ENCODE measurements at regions of chr20 and their contacts with region 1.

Region 1: DNA sequence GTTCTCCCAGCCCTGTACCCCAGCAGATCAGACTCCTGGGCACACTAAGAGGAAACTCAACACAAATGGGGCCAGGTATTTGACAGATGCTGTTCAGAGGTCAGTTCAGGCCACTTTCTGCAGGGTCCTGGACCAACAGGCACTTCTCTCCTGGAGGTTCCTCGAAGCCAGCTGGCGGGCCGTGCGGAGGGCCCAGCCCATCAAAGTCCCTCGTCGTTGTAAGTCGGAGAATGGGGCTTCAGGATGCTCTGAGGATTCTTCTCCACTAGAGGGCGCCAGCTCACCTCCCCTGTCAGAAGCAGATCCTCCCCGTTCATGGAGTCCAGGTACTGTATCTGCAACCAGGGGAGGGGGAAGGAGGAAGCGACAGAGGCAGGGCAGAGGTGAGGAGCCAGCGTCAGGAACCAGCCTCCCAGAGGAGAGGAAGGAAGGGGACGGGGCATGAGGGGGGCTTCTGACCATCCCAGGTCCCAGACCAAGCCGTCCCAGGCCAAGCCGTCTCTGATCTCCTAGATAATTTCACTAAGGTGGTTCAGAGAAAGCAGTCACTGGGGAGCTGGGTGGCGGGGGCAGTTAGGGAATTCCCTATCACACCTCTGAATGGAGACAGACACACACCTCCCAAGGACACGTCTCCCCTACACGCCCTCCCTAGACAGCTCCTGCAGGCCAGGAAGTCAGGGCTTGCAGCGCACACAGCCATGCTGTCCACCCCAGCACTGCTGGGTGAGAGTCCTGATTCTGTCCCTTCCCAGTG is 11.7 kb upstream of the FAM83C start:
- DNase-seq: peak; percentile 91
- ATAC-seq: peak; percentile 74
- H3K4me3 ChIP-seq: no peak overlapping the region
- H3K27ac ChIP-seq: peak overlapping the region; percentile 49
- H3K4me1 ChIP-seq: peaks cover 49% of the 10 kb centered on the region
- H3K27me3 ChIP-seq: no peaks in the 10 kb centered on the region
- CTCF ChIP-seq: peak; percentile 100
- EP300 ChIP-seq: 0 out of 4 replicates have a peak, but pooled peaks of 1 of the 2 experiments have one; percentile 12
- POLR2A ChIP-seq: no peak
- RAD21 ChIP-seq: peak; percentile 98

Region 2: GRCh38 chr20:35252037-35252461 is 51.9 kb before region 1 on chr20:
- CTCF ChIA-PET with region 1: no interaction called
- POLR2A ChIA-PET with region 1: no interaction called
- in situ Hi-C with region 1: no loop called
- intact Hi-C with region 1: no loop called
- DNase-seq: no peak
- ATAC-seq: no peak; the same call in 2 of the 3 replicates
- H3K4me3 ChIP-seq: no peak overlapping the region
- H3K27ac ChIP-seq: no peak overlapping the region
- H3K4me1 ChIP-seq: peaks cover 7% of the 10 kb centered on the region
- H3K27me3 ChIP-seq: no peaks in the 10 kb centered on the region
- CTCF ChIP-seq: no peak
- EP300 ChIP-seq: no peak
- POLR2A ChIP-seq: no peak
- RAD21 ChIP-seq: no peak

Region 3: DNA sequence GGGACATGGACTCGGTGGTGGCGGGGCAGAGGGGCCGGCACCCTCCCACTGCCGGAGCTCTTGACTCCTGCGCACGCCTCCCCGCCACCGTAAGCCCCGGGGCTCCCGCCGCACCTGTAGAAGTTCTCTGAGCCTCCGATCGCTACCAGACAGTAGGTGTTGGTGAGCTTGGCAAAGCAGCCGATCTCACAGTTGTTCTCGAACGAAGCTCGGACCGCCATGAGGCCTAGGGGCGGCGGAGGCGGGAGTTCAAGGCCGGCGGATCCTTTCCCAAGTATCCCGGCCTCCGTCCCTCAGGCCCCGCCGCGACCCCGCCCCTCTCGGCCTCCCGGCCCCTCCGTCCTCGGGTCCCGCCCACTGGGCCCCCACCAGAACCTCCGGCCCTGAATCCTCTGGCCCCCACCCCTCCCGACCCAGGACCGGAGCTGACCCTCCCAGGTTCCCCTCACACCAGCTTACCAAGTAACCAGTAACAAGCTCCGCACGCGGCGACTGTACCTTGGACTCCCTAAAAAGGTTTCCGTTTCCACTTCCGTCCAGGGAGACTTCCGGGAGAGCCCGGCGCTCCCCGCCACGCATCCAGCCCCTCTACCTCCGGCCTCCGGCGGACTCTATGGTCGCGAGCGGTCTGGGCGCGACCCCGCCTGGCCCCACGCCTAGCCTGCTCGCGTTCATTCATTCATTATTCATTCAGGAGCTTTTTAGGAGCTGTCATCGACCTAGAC is 19.5 kb before region 1 on chr20 and contains the start of gene EIF6:
- CTCF ChIA-PET with region 1: interaction called, 5 read pairs
- POLR2A ChIA-PET with region 1: interaction called, 49 read pairs
- in situ Hi-C with region 1: no loop called
- intact Hi-C with region 1: no loop called
- DNase-seq: peak; percentile 99
- ATAC-seq: peak; percentile 76
- H3K4me3 ChIP-seq: peak within 1 kb of the TSS; percentile 80 to 98 (median 81)
- H3K27ac ChIP-seq: peak within 1 kb of the TSS; percentile 95
- H3K4me1 ChIP-seq: peaks cover 74% of the 10 kb centered on the region
- H3K27me3 ChIP-seq: peaks cover 0 to 2% of the 10 kb centered on the region in 2 experiments; a peak in 2 of 5 replicates
- CTCF ChIP-seq: peak; percentile 19; the same call in 1 of the 2 replicates
- EP300 ChIP-seq: peak; percentile 43 to 59; a peak in 3 of 4 replicates
- POLR2A ChIP-seq: peak; percentile 94 to 96
- RAD21 ChIP-seq: peak; percentile 44
- total RNA-seq, gene EIF6: 462 and 603 TPM in 2 replicates

Region 4: GRCh38 chr20:35318502-35319157 is 14.7 kb after region 1 on chr20:
- CTCF ChIA-PET with region 1: interaction called, 4 read pairs
- POLR2A ChIA-PET with region 1: interaction called, 53 read pairs
- in situ Hi-C with region 1: no loop called
- intact Hi-C with region 1: no loop called
- DNase-seq: peak; percentile 71
- ATAC-seq: no peak
- H3K4me3 ChIP-seq: no peak overlapping the region
- H3K27ac ChIP-seq: no peak overlapping the region
- H3K4me1 ChIP-seq: peaks cover 25% of the 10 kb centered on the region
- H3K27me3 ChIP-seq: no peaks in the 10 kb centered on the region
- CTCF ChIP-seq: no peak
- EP300 ChIP-seq: no peak
- POLR2A ChIP-seq: no peak
- RAD21 ChIP-seq: no peak

Region 5: GRCh38 chr20:35329435-35330139 is 25.7 kb after region 1 on chr20:
- CTCF ChIA-PET with region 1: interaction called, 204 read pairs
- POLR2A ChIA-PET with region 1: interaction called, 78 read pairs
- in situ Hi-C with region 1: loop called (anchors 5 kb)
- intact Hi-C with region 1: loop called (anchors 1 kb)
- DNase-seq: peak; percentile 75
- ATAC-seq: peak; percentile 58
- H3K4me3 ChIP-seq: no peak overlapping the region
- H3K27ac ChIP-seq: peak overlapping the region; percentile 74
- H3K4me1 ChIP-seq: peaks cover 58% of the 10 kb centered on the region
- H3K27me3 ChIP-seq: no peaks in the 10 kb centered on the region
- CTCF ChIP-seq: peak; percentile 85
- EP300 ChIP-seq: 0 out of 4 replicates have a peak, but pooled peaks of 1 of the 2 experiments have one; percentile 3
- POLR2A ChIP-seq: no peak
- RAD21 ChIP-seq: peak; percentile 91

Region 6: GRCh38 chr20:35344354-35344837 is 40.5 kb after region 1 on chr20:
- CTCF ChIA-PET with region 1: no interaction called
- POLR2A ChIA-PET with region 1: no interaction called
- in situ Hi-C with region 1: no loop called
- intact Hi-C with region 1: loop called (anchors 5 kb)
- DNase-seq: peak; percentile 92
- ATAC-seq: peak; percentile 81
- H3K4me3 ChIP-seq: no peak overlapping the region
- H3K27ac ChIP-seq: peak overlapping the region; percentile 1
- H3K4me1 ChIP-seq: peaks cover 14% of the 10 kb centered on the region
- H3K27me3 ChIP-seq: no peaks in the 10 kb centered on the region
- CTCF ChIP-seq: 0 out of 2 replicates have a peak, but pooled peaks have one; percentile 3
- EP300 ChIP-seq: peak in 1 of 2 experiments; percentile 36; a peak in 3 of 4 replicates
- POLR2A ChIP-seq: no peak
- RAD21 ChIP-seq: no peak

Region 7: DNA sequence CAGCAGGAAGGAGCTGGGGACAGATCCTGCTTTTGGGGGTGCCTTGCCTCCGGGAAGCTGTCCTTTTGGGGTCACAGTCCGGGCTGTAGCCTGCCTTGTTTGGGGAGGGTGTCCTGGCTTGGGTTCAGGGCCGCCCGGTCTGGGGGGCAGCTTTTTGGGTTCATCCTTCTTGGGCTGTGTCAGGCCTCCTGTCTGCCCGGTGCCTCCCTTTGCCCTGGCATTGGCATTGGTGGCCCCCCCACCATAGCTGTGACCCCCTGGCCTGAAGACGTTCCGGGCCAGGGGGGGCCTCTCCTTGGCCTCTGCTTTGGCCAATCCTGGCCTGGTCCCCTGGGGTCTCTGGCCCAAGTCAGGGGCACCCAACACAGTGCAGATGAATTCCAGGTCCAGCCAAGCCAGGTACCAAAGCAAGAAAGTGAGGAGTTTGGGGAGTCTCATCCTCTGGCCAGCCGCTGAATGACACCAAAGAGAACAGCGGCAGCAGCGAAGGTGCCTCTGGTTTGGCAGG is 133.6 kb after region 1 on chr20:
- CTCF ChIA-PET with region 1: interaction called, 24 read pairs
- POLR2A ChIA-PET with region 1: interaction called, 3 read pairs
- in situ Hi-C with region 1: no loop called
- intact Hi-C with region 1: loop called (anchors 2 kb)
- DNase-seq: no peak
- ATAC-seq: no peak
- H3K4me3 ChIP-seq: peak overlapping the region in 1 of 3 experiments; percentile 21; a peak in 1 of 6 replicates
- H3K27ac ChIP-seq: no peak overlapping the region
- H3K4me1 ChIP-seq: peaks cover 61% of the 10 kb centered on the region
- H3K27me3 ChIP-seq: peaks cover 0 to 30% of the 10 kb centered on the region in 2 experiments; a peak in 3 of 5 replicates
- CTCF ChIP-seq: no peak
- EP300 ChIP-seq: no peak
- POLR2A ChIP-seq: no peak
- RAD21 ChIP-seq: no peak

Region 8: GRCh38 chr20:35447082-35447789 is 143.3 kb after region 1 on chr20:
- CTCF ChIA-PET with region 1: interaction called, 29 read pairs
- POLR2A ChIA-PET with region 1: interaction called, 3 read pairs
- in situ Hi-C with region 1: loop called (anchors 5 kb)
- intact Hi-C with region 1: loop called (anchors 1 kb)
- DNase-seq: peak; percentile 92
- ATAC-seq: peak; percentile 90
- H3K4me3 ChIP-seq: peak overlapping the region; percentile 51 to 61 (median 55)
- H3K27ac ChIP-seq: no peak overlapping the region
- H3K4me1 ChIP-seq: peaks cover 8% of the 10 kb centered on the region
- H3K27me3 ChIP-seq: no peaks in the 10 kb centered on the region; a peak in 2 of 5 replicates
- CTCF ChIP-seq: peak; percentile 95
- EP300 ChIP-seq: no peak
- POLR2A ChIP-seq: peak in 1 of 2 experiments; percentile 48; a peak in 2 of 4 replicates
- RAD21 ChIP-seq: peak; percentile 75

Measured in HepG2 (cell line).